Natural killer cell (primary cell): ENCODE measurements at regions of chr2 and their contacts with region 1.

Region 1: DNA sequence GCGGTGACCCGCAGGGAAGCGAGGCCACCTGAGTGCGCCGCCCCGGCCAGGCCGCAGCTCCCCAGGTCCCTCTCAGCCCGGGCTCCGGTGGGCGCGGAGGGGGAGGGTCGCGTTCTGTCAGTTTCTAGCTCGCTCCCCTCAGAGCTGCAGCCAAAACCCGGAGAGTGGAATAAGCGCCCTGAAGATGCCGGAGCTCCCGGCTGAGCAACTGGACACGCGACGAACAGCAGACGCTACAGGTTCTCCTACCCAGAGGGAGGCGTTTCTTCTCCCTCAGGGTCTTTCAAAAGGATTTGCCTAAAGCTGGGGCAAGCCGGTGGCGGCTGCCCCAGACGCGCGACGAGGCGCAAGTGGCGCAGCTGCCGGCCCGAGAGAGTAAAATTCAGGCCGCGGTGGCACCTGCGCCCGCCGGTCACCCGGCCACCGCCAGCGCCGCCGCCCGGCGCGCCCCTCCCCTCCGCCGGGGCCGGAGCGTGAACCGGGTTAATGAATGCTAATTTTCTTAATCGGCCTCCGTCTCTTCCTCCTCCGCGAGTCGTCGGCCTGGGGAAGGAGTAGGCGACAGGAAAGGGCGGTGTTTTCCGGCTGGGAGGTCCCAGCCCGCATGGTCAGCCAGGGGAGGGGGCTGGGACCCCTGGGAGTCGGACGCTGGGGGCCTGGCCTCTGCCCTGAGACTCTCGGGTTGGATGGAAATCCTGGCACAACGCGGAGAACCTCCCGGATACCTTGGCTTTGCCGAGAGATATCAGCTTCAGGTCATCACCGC is 845 bp upstream of the CDC42EP3 start:
- DNase-seq: peak; percentile 74 to 81
- ATAC-seq: peak; percentile 53 to 72 (median 63)
- H3K4me3 ChIP-seq: peak overlapping the region; percentile 93
- H3K4me3 Mint-ChIP-seq: peak overlapping the region; percentile 97
- H3K27ac ChIP-seq: peak overlapping the region; percentile 87
- H3K27ac Mint-ChIP-seq: peak overlapping the region; percentile 84 to 96
- H3K4me1 ChIP-seq: peaks cover 12% of the 10 kb centered on the region
- H3K4me1 Mint-ChIP-seq: peaks cover 41 to 60% of the 10 kb centered on the region in 2 donors
- H3K27me3 ChIP-seq: no peaks in the 10 kb centered on the region
- H3K27me3 Mint-ChIP-seq: no peaks in the 10 kb centered on the region
- CTCF ChIP-seq: no peak

Region 2: GRCh38 chr2:37585982-37586621 is 86.2 kb before region 1 on chr2:
- intact Hi-C with region 1: loop called (anchors 1 kb)
- DNase-seq: peak; percentile 53 to 89
- ATAC-seq: peak; percentile 83 to 91 (median 90)
- H3K4me3 ChIP-seq: no peak overlapping the region
- H3K4me3 Mint-ChIP-seq: peak overlapping the region; percentile 82
- H3K27ac ChIP-seq: peak overlapping the region; percentile 73
- H3K27ac Mint-ChIP-seq: peak overlapping the region; percentile 82 to 86
- H3K4me1 ChIP-seq: peaks cover 40% of the 10 kb centered on the region
- H3K4me1 Mint-ChIP-seq: peaks cover 66 to 69% of the 10 kb centered on the region in 2 donors
- H3K27me3 ChIP-seq: no peaks in the 10 kb centered on the region
- H3K27me3 Mint-ChIP-seq: no peaks in the 10 kb centered on the region
- CTCF ChIP-seq: no peak

Region 3: GRCh38 chr2:37600735-37601134 is 71.6 kb before region 1 on chr2:
- intact Hi-C with region 1: loop called (anchors 2 kb)
- DNase-seq: peak in 1 of 2 donors; percentile 34
- ATAC-seq: peak in 1 of 3 donors; percentile 11
- H3K4me3 ChIP-seq: peak overlapping the region; percentile 39
- H3K4me3 Mint-ChIP-seq: peak overlapping the region; percentile 97
- H3K27ac ChIP-seq: peak overlapping the region; percentile 93
- H3K27ac Mint-ChIP-seq: peak overlapping the region; percentile 98 to 99
- H3K4me1 ChIP-seq: peaks cover 16% of the 10 kb centered on the region
- H3K4me1 Mint-ChIP-seq: peaks cover 54 to 69% of the 10 kb centered on the region in 2 donors
- H3K27me3 ChIP-seq: no peaks in the 10 kb centered on the region
- H3K27me3 Mint-ChIP-seq: no peaks in the 10 kb centered on the region
- CTCF ChIP-seq: no peak

Region 4: GRCh38 chr2:37623971-37624900 is 48.1 kb before region 1 on chr2:
- intact Hi-C with region 1: loop called (anchors 2 kb)
- DNase-seq: peak in 1 of 2 donors; percentile 67
- ATAC-seq: peak; percentile 83 to 90 (median 83)
- H3K4me3 ChIP-seq: no peak overlapping the region
- H3K4me3 Mint-ChIP-seq: peak overlapping the region; percentile 68
- H3K27ac ChIP-seq: peak overlapping the region; percentile 75
- H3K27ac Mint-ChIP-seq: peak overlapping the region; percentile 90 to 92
- H3K4me1 ChIP-seq: peaks cover 41% of the 10 kb centered on the region
- H3K4me1 Mint-ChIP-seq: peaks cover 67 to 68% of the 10 kb centered on the region in 2 donors
- H3K27me3 ChIP-seq: no peaks in the 10 kb centered on the region
- H3K27me3 Mint-ChIP-seq: no peaks in the 10 kb centered on the region
- CTCF ChIP-seq: no peak

Region 5: DNA sequence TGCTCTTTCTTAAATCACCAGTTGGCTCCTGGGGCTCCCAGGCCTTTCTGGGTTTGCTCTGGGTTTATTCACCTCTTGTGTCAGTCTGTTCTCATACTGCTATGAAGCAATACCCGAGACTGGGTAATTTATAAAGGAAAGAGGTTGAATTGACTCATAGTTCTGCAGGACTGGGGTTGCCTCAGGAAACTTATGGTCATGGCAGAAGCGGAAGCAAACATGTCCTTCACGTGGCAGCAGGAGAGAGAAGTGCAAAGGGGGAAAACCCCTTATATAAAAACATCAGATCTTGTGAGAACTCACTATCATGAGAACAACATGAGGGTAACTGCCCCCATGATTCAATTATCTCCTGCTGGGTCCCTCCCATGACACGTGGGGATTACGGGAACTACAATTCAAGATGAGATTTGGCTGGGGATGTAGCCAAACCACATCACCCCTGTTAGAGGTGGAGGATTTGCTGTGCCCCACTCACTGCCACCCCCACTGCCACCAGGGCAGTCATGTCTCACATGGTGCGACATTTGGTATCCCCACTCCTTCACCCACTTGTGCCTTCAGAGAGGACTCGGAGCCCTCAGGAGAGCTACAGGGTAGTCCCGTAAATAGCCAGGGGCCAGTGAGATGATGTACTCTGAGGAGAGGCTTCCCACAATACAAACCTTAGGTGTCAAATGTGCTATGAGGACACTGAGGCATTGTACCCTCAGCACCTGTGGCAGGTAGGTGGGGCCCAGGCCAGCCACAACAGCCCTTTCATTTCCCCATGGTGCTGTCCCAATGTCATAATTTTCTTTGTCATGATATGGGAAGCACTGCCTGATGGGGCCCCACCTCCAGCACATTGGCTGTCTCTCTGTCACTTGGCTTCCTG is 36.5 kb before region 1 on chr2:
- intact Hi-C with region 1: loop called (anchors 5 kb)
- DNase-seq: peak; percentile 55 to 90
- ATAC-seq: peak; percentile 79 to 93 (median 89)
- H3K4me3 ChIP-seq: no peak overlapping the region
- H3K4me3 Mint-ChIP-seq: peak overlapping the region; percentile 74
- H3K27ac ChIP-seq: peak overlapping the region; percentile 91
- H3K27ac Mint-ChIP-seq: peak overlapping the region; percentile 91 to 96
- H3K4me1 ChIP-seq: peaks cover 38% of the 10 kb centered on the region
- H3K4me1 Mint-ChIP-seq: peaks cover 64 to 76% of the 10 kb centered on the region in 2 donors
- H3K27me3 ChIP-seq: no peaks in the 10 kb centered on the region
- H3K27me3 Mint-ChIP-seq: no peaks in the 10 kb centered on the region
- CTCF ChIP-seq: no peak

Region 6: DNA sequence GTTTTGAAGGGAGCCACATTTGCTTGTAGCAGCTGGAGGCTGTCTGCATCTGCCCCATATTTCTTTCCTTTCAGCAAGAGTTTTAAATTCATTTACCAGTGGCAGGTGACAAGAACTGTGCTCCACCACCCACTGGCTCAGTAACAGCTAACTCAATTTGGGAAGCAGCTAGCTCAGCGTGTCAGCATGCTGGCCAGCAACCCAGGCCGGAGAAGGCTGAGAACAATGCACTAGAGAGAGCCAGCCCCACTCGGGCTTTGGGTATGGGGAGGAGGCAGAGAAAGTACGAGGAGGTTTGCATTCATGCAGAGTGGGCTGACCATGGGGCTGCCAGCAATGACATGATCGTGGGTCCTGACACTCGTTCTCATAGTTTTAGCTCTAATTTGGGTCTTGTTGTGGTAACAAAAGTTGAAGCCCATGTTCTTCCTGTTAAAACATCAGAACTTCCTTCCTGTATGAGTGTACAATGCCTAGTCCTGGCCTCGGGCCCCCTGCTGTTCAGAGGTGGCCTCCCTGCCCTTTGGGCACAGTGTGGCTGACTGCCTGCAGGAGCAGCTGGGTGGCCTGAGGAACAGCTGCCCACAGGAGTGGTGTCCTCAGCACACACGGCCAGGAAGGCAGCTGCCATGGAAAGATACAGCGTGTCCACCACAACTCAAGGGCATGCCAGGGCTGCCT is 23.8 kb before region 1 on chr2:
- intact Hi-C with region 1: loop called (anchors 2 kb)
- DNase-seq: peak; percentile 57 to 72
- ATAC-seq: peak; percentile 82 to 91 (median 87)
- H3K4me3 ChIP-seq: no peak overlapping the region
- H3K4me3 Mint-ChIP-seq: peak overlapping the region; percentile 93
- H3K27ac ChIP-seq: peak overlapping the region; percentile 77
- H3K27ac Mint-ChIP-seq: peak overlapping the region; percentile 91 to 96
- H3K4me1 ChIP-seq: peaks cover 72% of the 10 kb centered on the region
- H3K4me1 Mint-ChIP-seq: peaks cover 93 to 95% of the 10 kb centered on the region in 2 donors
- H3K27me3 ChIP-seq: no peaks in the 10 kb centered on the region
- H3K27me3 Mint-ChIP-seq: no peaks in the 10 kb centered on the region
- CTCF ChIP-seq: peak; percentile 47

Region 7: GRCh38 chr2:37654932-37655331 is 17.4 kb before region 1 on chr2:
- intact Hi-C with region 1: loop called (anchors 2 kb)
- DNase-seq: peak in 1 of 2 donors; percentile 29
- ATAC-seq: peak in 2 of 3 donors; percentile 9 to 31
- H3K4me3 ChIP-seq: no peak overlapping the region
- H3K4me3 Mint-ChIP-seq: peak overlapping the region; percentile 74
- H3K27ac ChIP-seq: peak overlapping the region; percentile 74
- H3K27ac Mint-ChIP-seq: peak overlapping the region; percentile 91 to 96
- H3K4me1 ChIP-seq: peaks cover 70% of the 10 kb centered on the region
- H3K4me1 Mint-ChIP-seq: peaks cover 96 to 98% of the 10 kb centered on the region in 2 donors
- H3K27me3 ChIP-seq: no peaks in the 10 kb centered on the region
- H3K27me3 Mint-ChIP-seq: no peaks in the 10 kb centered on the region
- CTCF ChIP-seq: no peak